PC-3 (cell line): ENCODE measurements at regions of chr7 and their contacts with region 1.

Region 1: GRCh38 chr7:85186521-85187241 is at the start of gene SEMA3D:
- DNase-seq: peak; percentile 84
- ATAC-seq: peak; percentile 82
- H3K4me3 ChIP-seq: peak within 1 kb of the TSS; percentile 90
- H3K27ac ChIP-seq: no peak within 1 kb of the TSS
- H3K4me1 ChIP-seq: peaks cover 18% of the 10 kb centered on the region; the same call in 1 of the 2 replicates
- H3K27me3 ChIP-seq: no peaks in the 10 kb centered on the region
- CTCF ChIP-seq: peak; percentile 83
- total RNA-seq, gene SEMA3D: 4.0 and 4.8 TPM in 2 replicates

Region 2: DNA sequence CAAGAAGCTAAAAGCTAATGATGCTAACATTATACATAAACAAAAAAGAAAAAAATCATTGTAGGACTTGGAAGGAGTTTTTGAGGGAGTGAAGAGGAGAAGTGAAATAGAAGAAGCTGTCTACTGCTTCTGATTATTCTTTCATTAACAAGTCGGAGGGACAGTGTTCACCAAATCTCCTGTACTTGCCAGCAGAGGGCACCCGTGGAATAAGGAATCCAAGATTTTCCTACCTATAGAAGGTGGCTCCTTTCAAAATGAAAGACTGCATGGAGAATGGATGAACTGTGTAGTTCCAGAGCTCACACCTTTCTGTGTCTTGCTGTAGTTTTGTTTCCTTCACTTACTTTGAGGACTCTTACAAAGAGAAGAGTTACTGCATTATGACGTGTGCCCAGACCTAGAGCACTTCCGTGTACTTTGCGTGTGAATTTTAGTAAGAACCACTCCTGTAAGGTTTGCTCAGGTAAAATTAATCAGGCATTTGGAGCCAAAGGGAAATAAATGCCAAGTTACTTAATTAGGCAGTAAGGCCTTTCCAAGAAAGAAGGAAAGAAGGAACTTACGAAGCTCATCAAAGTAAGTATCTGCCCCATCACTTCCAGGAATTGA is 145.0 kb before region 1 on chr7:
- CTCF ChIA-PET with region 1: interaction called, 11 read pairs
- POLR2A ChIA-PET with region 1: no interaction called
- intact Hi-C with region 1: loop called (anchors 1 kb)
- DNase-seq: peak; percentile 87
- ATAC-seq: peak; percentile 98
- H3K4me3 ChIP-seq: no peak overlapping the region
- H3K27ac ChIP-seq: no peak overlapping the region
- H3K4me1 ChIP-seq: no peaks in the 10 kb centered on the region
- H3K27me3 ChIP-seq: no peaks in the 10 kb centered on the region
- CTCF ChIP-seq: peak; percentile 89

Region 3: DNA sequence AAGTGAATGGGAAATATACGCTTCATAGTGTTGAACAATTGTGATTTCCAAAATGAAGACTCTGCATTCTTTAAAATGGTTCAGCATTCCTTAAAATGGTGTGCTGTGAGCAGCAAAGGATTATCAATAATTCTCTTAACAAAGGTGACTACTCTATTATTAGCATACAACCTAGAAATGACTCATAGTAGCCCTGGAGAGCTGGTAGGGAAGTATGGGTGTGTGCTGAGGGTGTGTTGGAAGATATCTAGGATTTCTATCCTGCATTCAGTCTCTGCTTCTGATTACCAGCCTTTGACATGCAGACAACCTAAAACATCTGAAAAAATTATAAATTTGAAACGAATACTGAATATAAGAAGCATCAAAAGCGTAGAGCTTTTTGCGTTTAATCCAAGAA is 72.3 kb before region 1 on chr7:
- CTCF ChIA-PET with region 1: no interaction called
- POLR2A ChIA-PET with region 1: interaction called, 34 read pairs
- intact Hi-C with region 1: no loop called
- DNase-seq: peak; percentile 66
- ATAC-seq: peak; percentile 85
- H3K4me3 ChIP-seq: no peak overlapping the region
- H3K27ac ChIP-seq: peak overlapping the region; percentile 52
- H3K4me1 ChIP-seq: peaks cover 37% of the 10 kb centered on the region
- H3K27me3 ChIP-seq: no peaks in the 10 kb centered on the region
- CTCF ChIP-seq: no peak

Region 4: DNA sequence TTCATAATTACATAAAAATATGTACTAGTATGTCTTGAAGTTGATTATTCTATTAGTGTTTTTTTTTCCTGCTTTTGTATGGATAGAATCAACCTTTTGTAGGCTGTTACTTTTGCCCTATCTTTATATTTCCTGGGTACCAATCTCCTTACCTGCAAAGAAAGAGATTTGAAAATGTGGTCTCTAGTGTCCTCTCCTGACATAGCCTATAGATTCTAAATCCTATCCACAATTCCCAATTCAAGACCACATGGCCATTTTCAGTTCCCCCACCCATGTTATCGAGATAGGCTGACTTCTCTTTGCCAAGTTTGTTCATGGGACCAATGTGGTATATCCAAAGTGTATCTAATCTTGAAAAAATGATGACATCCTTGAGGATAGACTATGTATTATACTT is 269.6 kb after region 1 on chr7:
- CTCF ChIA-PET with region 1: interaction called, 3 read pairs
- POLR2A ChIA-PET with region 1: no interaction called
- intact Hi-C with region 1: loop called (anchors 2 kb)
- DNase-seq: no peak
- ATAC-seq: no peak; the same call in 1 of the 2 replicates
- H3K4me3 ChIP-seq: no peak overlapping the region
- H3K27ac ChIP-seq: no peak overlapping the region
- H3K4me1 ChIP-seq: no peaks in the 10 kb centered on the region
- H3K27me3 ChIP-seq: no peaks in the 10 kb centered on the region
- CTCF ChIP-seq: 0 out of 2 replicates have a peak, but pooled peaks have one; percentile 15

Region 5: GRCh38 chr7:85567983-85568382 is 381.3 kb after region 1 on chr7:
- CTCF ChIA-PET with region 1: no interaction called
- POLR2A ChIA-PET with region 1: no interaction called
- intact Hi-C with region 1: no loop called
- DNase-seq: no peak
- ATAC-seq: no peak
- H3K4me3 ChIP-seq: no peak overlapping the region
- H3K27ac ChIP-seq: no peak overlapping the region
- H3K4me1 ChIP-seq: no peaks in the 10 kb centered on the region
- H3K27me3 ChIP-seq: no peaks in the 10 kb centered on the region
- CTCF ChIP-seq: no peak

Region 6: DNA sequence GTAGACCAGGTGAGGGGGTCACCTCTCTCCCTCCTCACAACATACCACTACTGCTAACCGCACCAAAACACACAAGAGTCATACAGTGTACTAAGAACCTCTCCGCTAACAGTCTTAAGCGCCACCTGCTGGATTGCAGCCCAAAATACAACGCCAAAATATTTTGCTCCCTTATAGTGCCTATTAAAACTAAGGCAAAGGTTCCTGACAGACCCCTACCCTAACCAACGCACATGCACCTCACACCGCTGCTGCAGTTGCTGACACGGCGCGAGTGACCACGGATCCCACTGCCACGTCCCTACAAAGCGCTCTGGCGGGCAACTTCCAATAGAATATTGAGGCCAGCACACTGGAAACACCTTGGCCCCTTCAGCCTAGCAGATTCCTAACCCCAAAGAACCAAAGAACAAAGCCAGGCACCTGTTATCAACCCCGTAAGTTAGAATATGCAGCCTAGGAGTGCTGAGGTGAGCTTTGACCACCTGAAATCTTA is 563.8 kb after region 1 on chr7:
- CTCF ChIA-PET with region 1: no interaction called
- POLR2A ChIA-PET with region 1: no interaction called
- intact Hi-C with region 1: loop called (anchors 2 kb)
- DNase-seq: peak; percentile 84
- ATAC-seq: peak; percentile 86
- H3K4me3 ChIP-seq: no peak overlapping the region
- H3K27ac ChIP-seq: no peak overlapping the region
- H3K4me1 ChIP-seq: peaks cover 19% of the 10 kb centered on the region
- H3K27me3 ChIP-seq: no peaks in the 10 kb centered on the region
- CTCF ChIP-seq: peak; percentile 82

Region 7: DNA sequence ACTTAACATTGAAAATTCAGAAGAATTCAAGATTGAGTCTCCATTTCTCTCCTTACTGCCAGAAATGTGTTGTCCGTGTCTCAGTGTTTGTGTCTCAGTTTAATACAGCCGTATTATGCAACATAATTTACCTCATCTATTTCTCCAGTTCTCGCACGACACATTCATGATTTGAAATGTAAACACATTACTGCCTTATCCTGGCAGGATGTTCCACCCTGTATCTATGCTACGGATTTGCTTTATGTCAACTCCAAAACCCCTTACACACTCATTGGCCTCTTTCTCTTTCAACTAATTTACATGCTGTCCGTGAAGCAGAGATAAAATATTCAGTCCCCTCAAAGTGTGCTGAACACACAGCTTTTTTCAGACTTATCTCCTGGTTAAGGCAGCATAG is 653.9 kb after region 1 on chr7:
- CTCF ChIA-PET with region 1: interaction called, 11 read pairs
- POLR2A ChIA-PET with region 1: no interaction called
- intact Hi-C with region 1: no loop called
- DNase-seq: no peak
- ATAC-seq: no peak
- H3K4me3 ChIP-seq: no peak overlapping the region
- H3K27ac ChIP-seq: no peak overlapping the region
- H3K4me1 ChIP-seq: no peaks in the 10 kb centered on the region
- H3K27me3 ChIP-seq: 0 out of 2 replicates have a peak, but pooled peaks cover 7% of the 10 kb centered on the region
- CTCF ChIP-seq: no peak